ENCODE measurements at regions of chr1 and their contacts with region 1.

Region 1: DNA sequence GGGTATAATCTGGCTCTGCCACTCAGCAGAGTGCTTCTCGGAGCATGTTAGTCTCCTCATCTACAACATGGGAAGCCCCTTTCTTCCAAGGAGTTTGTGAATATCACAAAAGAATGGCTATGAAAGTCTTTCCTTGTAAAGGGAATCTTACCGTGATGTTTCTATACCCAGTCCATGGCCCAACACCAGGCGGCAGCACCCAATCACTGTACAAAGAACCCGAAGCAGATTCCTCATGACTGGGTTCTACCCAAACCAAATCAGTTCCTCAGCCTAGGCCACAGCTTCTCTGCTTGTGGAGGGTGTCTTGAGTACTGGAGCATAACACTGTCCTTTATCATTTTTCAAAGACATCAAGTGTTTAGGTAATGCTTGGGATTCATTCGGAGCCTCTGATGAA is 16.6 kb upstream of the SLFNL1 start:
- H3K4me3 Mint-ChIP-seq: no peak overlapping the region
- H3K27ac Mint-ChIP-seq: no peak overlapping the region
- H3K4me1 Mint-ChIP-seq: peaks cover 13% of the 10 kb centered on the region
- H3K27me3 Mint-ChIP-seq: no peaks in the 10 kb centered on the region

Region 2: GRCh38 chr1:40919475-40920011 is 118.6 kb before region 1 on chr1:
- intact Hi-C with region 1: no loop called
- H3K4me3 Mint-ChIP-seq: no peak overlapping the region
- H3K27ac Mint-ChIP-seq: no peak overlapping the region
- H3K4me1 Mint-ChIP-seq: no peaks in the 10 kb centered on the region
- H3K27me3 Mint-ChIP-seq: peaks cover 2% of the 10 kb centered on the region

Region 3: DNA sequence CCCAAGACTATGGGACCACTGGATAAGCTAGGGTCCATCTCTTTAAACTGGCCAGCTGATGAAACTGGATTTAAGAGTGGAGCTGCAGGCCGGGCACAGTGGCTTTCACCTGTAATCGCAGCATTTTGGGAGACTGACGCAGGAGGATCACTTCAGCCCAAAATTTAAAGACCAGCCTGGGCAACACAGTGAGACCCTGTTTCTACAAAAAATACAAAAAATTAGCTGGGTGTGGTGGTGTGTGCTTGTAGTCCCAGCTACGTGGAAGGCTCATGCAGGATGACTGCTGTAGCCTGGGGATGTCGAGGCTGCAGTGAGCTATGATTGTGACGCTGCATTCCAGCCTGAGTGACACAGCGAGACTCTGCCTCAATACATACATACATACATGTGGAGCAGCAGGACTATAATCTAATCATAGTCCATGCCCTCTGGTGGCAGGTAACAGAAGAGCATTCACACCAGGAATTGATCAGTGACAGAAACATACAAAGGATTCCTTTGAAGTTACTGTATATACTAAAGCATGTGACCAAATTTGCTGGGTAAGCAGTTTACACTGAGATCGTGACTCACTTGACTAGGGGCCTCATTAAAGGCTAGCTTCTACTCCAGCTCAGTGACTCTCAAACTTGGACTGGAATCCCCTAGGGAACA is 84.9 kb after region 1 on chr1:
- intact Hi-C with region 1: loop called (anchors 10 kb)
- H3K4me3 Mint-ChIP-seq: no peak overlapping the region
- H3K27ac Mint-ChIP-seq: no peak overlapping the region
- H3K4me1 Mint-ChIP-seq: peaks cover 5% of the 10 kb centered on the region
- H3K27me3 Mint-ChIP-seq: no peaks in the 10 kb centered on the region

Region 4: GRCh38 chr1:41222496-41222895 is 184.4 kb after region 1 on chr1:
- intact Hi-C with region 1: no loop called
- H3K4me3 Mint-ChIP-seq: no peak overlapping the region
- H3K27ac Mint-ChIP-seq: no peak overlapping the region
- H3K4me1 Mint-ChIP-seq: peaks cover 12% of the 10 kb centered on the region
- H3K27me3 Mint-ChIP-seq: no peaks in the 10 kb centered on the region